ENCODE measurements at regions of chr3 and their contacts with region 1.

Region 1: DNA sequence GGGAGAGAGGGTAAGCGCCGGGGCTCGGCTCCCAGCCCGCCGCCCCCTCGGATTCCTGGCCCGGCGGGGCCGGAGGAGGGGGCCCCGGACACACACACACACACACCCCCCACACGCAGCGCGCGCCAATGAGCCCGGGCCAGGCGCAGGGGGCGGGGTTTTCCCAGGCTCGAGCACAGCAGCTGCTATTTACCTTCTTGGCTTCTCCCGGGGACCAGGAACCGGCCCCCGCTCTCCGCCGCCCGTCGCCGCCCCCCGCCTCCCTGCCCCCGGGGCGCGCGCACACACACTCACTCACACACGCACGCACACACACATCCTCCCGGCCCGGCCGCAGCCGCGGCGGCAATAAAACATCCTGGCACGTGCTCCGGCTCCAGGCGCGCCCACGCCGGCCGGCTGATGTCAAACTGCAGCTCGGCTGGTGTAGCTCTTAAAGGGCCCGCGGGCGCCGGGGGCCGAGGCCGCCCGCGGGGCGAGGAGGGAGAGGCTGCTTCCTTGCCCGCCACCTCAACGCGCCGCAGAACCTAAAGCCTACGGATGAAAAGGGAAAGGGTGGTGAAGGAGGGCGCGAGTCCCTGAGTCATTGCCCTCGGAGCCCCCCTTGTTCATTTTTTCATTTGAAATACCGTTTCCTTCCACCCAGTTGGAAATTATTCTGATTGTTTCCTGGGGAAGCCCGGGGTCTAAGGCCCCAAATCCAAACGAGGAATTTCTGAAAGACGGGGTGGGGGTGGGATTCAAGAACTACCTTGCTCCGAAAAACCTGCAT is 1.0 kb upstream of the HES1 start:
- DNase-seq: peak; percentile 91 to 97 (median 95)
- H3K4me3 ChIP-seq: peak overlapping the region; percentile 52
- H3K27ac ChIP-seq: peak overlapping the region; percentile 86 to 96
- H3K4me1 ChIP-seq: peaks cover 8% of the 10 kb centered on the region
- H3K27me3 ChIP-seq: no peaks in the 10 kb centered on the region
- CTCF ChIP-seq: no peak
- EP300 ChIP-seq: peak; percentile 53
- POLR2A ChIP-seq: peak; percentile 28

Region 2: DNA sequence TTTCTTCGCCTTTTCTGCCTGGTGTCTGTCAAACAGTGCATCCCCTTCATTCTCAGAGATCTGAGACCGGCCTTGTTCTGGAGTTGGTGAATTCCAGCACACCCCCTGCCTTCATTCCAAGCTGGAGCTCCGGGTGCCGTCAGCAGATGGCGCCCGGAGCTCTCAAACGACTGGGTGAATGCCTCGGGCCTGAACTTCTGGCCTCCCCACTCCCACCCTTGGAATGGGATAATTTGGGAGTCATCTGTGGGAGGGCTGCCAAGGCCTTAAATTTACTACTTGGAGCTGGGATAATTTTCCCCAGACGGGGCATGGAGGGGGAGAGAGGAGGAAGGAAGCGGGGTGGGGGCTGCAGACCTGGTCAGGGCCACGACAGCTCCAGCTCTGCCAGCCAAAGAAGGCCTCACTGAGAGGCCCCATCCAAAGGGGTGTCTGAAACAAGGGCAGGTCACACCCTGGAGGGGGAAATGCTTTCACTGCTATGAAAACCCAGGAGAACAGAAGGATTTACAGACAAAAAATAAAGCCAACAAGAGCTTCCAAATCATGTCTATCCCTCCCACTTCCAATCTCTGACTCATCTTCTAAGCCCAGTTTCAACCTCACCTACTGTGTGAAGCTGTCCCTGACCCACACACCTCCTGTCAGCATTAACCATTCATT is 354.0 kb before region 1 on chr3:
- intact Hi-C with region 1: loop called in 2 of 4 experiments (anchors 5 to 10 kb)
- DNase-seq: peak; percentile 79 to 87 (median 84)
- H3K4me3 ChIP-seq: no peak overlapping the region
- H3K27ac ChIP-seq: peak overlapping the region in 1 of 2 donors; percentile 26
- H3K4me1 ChIP-seq: no peaks in the 10 kb centered on the region
- H3K27me3 ChIP-seq: no peaks in the 10 kb centered on the region
- CTCF ChIP-seq: peak; percentile 59 to 78 (median 71)
- EP300 ChIP-seq: no peak
- POLR2A ChIP-seq: peak; percentile 27

Region 3: GRCh38 chr3:193971261-193971751 is 163.6 kb before region 1 on chr3:
- intact Hi-C with region 1: loop called in 1 of 4 experiments (anchors 10 kb)
- DNase-seq: no peak
- H3K4me3 ChIP-seq: no peak overlapping the region
- H3K27ac ChIP-seq: no peak overlapping the region
- H3K4me1 ChIP-seq: no peaks in the 10 kb centered on the region
- H3K27me3 ChIP-seq: no peaks in the 10 kb centered on the region
- CTCF ChIP-seq: no peak
- EP300 ChIP-seq: no peak
- POLR2A ChIP-seq: no peak

Region 4: DNA sequence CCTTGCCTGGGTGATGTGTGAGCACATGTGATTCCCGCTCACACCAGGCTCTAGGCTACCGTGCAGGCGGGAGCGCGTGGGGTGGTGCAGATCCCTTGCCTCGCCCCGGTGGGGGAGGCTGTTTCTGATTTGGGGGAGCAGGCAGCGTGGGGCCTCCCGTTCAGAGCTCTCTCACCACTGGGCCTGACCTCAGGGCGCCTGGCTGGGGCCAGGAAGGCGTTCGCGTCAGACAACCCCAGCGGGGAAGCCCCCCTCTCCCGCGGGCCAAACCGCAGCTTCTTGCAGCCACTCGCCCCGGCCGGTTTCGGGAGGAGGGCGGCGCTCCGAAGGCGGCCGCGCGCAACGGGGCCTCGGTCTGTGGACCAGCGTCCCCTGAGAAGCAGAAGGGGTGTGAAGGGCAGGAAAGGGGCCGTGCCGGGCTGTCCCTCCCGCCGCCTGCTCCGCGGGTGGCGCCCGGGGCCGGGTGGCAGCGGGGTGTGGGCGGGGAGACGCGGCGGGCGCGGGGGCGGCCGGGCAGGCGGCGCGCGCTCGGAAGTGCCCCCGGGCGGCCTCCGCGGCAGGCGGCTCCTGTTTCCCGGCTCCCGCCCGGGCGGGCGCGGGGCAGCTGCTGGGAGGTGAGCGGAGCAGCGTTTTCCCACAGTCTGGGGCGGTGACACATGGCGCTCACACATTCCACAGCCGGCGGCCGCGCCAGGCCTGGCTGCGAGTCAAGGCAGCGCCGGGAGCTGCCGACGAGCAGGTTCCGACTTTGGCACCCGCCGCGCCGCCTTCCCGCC is 64.1 kb before region 1 on chr3:
- intact Hi-C with region 1: loop called in 2 of 4 experiments (anchors 10 kb)
- DNase-seq: peak; percentile 71 to 84 (median 83)
- H3K4me3 ChIP-seq: peak overlapping the region; percentile 36
- H3K27ac ChIP-seq: peak overlapping the region in 1 of 2 donors; percentile 56
- H3K4me1 ChIP-seq: peaks cover 7% of the 10 kb centered on the region
- H3K27me3 ChIP-seq: no peaks in the 10 kb centered on the region
- CTCF ChIP-seq: no peak
- EP300 ChIP-seq: no peak
- POLR2A ChIP-seq: peak; percentile 14

Region 5: DNA sequence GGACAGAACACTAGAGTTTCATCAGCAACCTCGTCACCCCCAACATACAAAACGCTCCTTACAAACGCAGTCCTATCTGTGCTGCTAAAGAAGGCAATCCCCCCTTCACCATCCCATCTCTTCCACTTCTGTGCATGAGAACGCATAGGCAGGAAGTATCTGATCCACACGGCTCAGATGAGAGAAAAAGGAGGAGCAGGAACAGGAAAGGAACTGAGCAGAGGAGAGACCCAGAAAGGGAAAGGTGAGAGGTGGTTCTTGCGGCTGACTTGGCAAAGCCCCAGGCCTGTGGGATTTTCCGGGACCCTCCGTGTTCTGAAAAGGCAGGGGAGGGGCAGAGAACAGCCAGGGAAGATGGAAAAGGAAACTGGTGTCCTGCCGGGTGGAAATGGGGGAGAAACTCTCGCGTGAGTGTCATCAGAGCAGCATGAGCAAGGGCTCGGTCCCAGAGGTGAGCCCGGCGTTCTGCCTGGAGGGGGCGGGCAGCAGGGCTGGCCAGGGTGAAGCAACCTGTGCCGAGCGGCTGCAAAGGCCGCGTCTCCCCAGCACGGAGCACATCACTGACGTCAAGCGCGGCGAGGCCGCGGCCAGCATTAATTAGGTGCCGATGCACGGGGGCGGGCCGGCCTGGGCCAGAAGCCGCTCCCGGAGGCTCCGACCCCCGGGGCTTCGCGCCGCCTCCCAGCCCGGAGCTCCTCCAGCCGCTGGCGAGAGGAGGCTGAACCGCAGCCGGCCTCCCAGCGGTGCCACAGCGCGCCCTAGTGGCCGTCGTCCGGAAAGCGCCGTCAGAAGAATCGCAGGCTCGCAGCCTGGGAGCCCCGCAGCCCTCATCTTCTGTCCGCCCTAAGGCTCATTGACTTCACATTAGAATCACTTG is 180.4 kb after region 1 on chr3:
- intact Hi-C with region 1: loop called in 3 of 4 experiments (anchors 2 to 5 kb)
- DNase-seq: peak; percentile 92 to 96 (median 94)
- H3K4me3 ChIP-seq: peak overlapping the region; percentile 18
- H3K27ac ChIP-seq: peak overlapping the region; percentile 28 to 80
- H3K4me1 ChIP-seq: peaks cover 11% of the 10 kb centered on the region
- H3K27me3 ChIP-seq: no peaks in the 10 kb centered on the region
- CTCF ChIP-seq: peak; percentile 97
- EP300 ChIP-seq: peak; percentile 77
- POLR2A ChIP-seq: peak; percentile 21

Measured in ovary (tissue), 10 donors.